Caco-2 (cell line): ENCODE measurements at regions of chr5 and their contacts with region 1.

Region 1: DNA sequence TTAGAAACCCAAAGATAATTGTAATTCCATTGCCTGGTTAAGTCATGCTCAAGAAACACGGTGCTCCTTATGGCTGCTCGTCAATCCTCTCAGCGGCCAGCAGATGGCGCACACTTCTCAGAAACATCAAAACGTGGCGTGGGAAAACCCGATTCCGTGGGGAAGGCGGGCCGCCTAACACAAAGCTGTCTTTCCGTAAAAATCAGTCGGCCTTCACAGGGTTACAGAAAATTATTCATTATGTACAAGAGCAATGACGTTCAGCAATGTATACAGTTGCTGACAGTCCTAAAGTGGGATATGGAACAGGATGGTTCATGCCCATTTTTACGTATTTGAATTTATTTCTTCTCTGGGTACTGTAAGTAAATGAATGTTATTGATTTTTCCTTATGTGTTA is 83.5 kb downstream of the PDE4D start:
- DNase-seq: peak; percentile 60 to 61
- H3K4me3 ChIP-seq: no peak overlapping the region
- H3K4me3 Mint-ChIP-seq: peak overlapping the region; percentile 17
- H3K27ac Mint-ChIP-seq: no peak overlapping the region
- H3K4me1 ChIP-seq: 0 out of 2 replicates have a peak, but pooled peaks cover 5% of the 10 kb centered on the region
- H3K4me1 Mint-ChIP-seq: peaks cover 6% of the 10 kb centered on the region
- H3K27me3 ChIP-seq: no peaks in the 10 kb centered on the region
- H3K27me3 Mint-ChIP-seq: peaks cover 12% of the 10 kb centered on the region
- CTCF ChIP-seq: peak; percentile 89 to 94

Region 2: DNA sequence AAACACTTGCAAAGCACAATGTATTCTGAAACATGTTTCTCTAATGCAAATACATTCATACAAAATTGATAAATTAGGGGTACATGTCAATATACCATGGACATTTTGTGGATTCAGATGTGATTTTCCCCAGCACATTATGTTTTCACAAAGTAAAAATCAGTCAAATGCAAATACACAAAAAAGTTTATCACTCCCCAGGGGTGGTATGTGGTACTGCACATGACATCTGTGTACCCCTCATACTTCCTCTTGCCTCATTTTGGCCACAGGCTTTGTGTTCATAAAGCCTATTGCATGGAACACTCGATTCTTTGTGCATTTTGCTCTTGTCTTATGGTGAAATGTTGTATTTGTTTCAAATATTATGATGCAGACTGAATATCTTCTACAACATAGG is 200.3 kb after region 1 on chr5:
- CTCF ChIA-PET with region 1: no interaction called
- POLR2A ChIA-PET with region 1: no interaction called
- intact Hi-C with region 1: loop called (anchors 1 kb)
- DNase-seq: no peak
- H3K4me3 ChIP-seq: no peak overlapping the region
- H3K4me3 Mint-ChIP-seq: no peak overlapping the region
- H3K27ac Mint-ChIP-seq: no peak overlapping the region
- H3K4me1 ChIP-seq: no peaks in the 10 kb centered on the region
- H3K4me1 Mint-ChIP-seq: no peaks in the 10 kb centered on the region
- H3K27me3 ChIP-seq: no peaks in the 10 kb centered on the region
- H3K27me3 Mint-ChIP-seq: peaks cover 6% of the 10 kb centered on the region
- CTCF ChIP-seq: peak; percentile 33 to 47

Region 3: DNA sequence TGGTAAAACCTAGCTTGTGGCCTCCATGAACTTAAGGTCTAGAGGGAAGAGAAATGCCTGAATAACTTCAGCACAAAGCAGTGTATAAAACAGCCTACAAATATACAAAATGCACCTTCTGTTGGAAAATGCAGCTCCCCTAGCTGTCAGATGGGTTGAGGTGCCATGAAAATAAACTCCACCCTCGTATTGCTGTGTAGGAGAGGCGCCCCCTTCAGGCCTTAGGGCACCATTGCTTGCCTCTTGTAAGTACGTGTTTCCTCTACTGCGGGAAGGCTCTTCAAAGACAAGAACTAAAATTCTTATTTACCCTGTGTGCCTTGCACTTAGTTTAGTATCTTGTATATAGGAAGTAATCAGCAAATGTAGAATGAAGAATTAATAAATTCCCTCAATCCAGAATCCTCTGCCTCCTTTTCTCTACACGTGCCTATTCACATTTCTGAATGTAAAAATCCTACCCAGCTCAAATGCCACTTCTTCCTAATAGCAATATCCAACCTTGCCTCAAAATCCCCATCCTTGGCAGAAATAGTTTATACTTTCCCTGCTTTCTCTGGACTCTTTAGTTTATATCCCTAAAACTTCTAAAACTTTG is 477.2 kb after region 1 on chr5:
- CTCF ChIA-PET with region 1: interaction called, 4 read pairs
- POLR2A ChIA-PET with region 1: no interaction called
- intact Hi-C with region 1: loop called (anchors 1 kb)
- DNase-seq: peak; percentile 56 to 63
- H3K4me3 ChIP-seq: no peak overlapping the region
- H3K4me3 Mint-ChIP-seq: no peak overlapping the region
- H3K27ac Mint-ChIP-seq: no peak overlapping the region
- H3K4me1 ChIP-seq: no peaks in the 10 kb centered on the region
- H3K4me1 Mint-ChIP-seq: no peaks in the 10 kb centered on the region
- H3K27me3 ChIP-seq: no peaks in the 10 kb centered on the region
- H3K27me3 Mint-ChIP-seq: peaks cover 15% of the 10 kb centered on the region
- CTCF ChIP-seq: peak; percentile 72 to 75

Region 4: DNA sequence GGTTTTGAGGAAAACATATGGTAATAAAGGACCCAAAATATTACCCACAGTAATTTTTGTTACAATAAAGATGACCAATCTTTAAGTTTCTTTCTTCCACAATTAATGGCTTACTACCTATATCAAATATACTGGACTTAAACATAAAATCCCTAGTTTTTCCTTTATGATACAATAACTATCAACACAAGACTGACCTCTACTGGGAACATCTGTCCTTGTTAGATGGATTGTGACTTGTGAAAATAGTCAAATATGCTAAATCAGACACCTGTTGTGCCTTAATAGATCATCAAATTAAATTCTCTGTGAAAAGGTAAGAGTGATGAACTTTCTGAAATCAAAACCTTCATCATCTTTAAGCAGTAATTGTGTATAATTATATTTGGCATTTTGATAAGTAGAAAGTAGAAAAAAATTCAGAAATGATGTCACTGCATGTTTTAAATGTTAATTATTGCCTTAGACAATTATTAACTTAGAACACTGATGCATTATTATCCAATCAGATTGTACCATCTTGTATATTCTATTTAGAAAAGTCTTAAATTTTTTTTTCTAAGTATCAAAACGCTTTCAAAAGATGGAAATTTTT is 776.4 kb after region 1 on chr5:
- CTCF ChIA-PET with region 1: no interaction called
- POLR2A ChIA-PET with region 1: no interaction called
- intact Hi-C with region 1: loop called (anchors 5 kb)
- DNase-seq: no peak
- H3K4me3 ChIP-seq: no peak overlapping the region
- H3K4me3 Mint-ChIP-seq: no peak overlapping the region
- H3K27ac Mint-ChIP-seq: no peak overlapping the region
- H3K4me1 ChIP-seq: no peaks in the 10 kb centered on the region
- H3K4me1 Mint-ChIP-seq: no peaks in the 10 kb centered on the region
- H3K27me3 ChIP-seq: no peaks in the 10 kb centered on the region
- H3K27me3 Mint-ChIP-seq: no peaks in the 10 kb centered on the region
- CTCF ChIP-seq: peak; percentile 27 to 54